Posterior cingulate gyrus (tissue), 11 donors: ENCODE measurements at regions of chr1 and their contacts with region 1.

Region 1: DNA sequence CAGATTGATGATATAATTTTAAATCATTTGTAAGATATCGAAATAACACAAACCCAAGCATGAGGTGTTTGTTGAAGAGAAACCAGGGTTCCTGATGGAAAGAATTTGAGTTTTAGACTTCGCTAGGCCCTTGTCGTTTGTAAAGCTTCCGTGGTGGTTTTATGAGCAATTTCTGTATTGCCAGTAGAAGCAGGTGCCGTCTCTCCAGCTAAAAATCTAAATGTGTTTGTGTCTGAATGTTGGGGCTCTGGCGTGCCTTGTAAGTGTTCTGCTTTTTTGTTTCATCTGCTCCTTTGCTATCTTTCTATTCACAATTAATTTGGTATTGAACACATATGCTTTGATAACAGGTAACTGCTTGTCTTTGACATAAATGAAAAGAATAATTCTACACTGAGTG is 27.5 kb downstream of the CHRM3 start:
- DNase-seq: no peak

Region 2: GRCh38 chr1:239274242-239274830 is 139.6 kb before region 1 on chr1:
- intact Hi-C with region 1: no loop called
- DNase-seq: no peak

Region 3: DNA sequence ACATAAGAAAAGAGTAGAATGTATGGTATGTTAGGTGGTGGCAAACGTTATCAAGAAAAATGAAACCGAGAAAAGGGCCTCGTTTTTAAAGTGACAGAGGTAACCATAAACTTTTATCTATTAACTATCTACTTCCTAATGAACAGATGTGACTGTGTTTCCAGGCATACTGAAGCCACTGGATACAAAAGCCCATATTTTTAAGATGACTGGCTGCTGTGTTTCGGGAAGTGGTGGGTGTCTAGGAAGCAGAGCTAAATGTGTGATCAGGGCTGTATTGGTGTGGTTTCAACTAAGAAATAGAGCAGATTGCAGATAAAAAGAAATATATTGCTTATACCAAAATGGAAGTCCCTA is 44.2 kb after region 1 on chr1:
- intact Hi-C with region 1: no loop called
- DNase-seq: no peak

Region 4: DNA sequence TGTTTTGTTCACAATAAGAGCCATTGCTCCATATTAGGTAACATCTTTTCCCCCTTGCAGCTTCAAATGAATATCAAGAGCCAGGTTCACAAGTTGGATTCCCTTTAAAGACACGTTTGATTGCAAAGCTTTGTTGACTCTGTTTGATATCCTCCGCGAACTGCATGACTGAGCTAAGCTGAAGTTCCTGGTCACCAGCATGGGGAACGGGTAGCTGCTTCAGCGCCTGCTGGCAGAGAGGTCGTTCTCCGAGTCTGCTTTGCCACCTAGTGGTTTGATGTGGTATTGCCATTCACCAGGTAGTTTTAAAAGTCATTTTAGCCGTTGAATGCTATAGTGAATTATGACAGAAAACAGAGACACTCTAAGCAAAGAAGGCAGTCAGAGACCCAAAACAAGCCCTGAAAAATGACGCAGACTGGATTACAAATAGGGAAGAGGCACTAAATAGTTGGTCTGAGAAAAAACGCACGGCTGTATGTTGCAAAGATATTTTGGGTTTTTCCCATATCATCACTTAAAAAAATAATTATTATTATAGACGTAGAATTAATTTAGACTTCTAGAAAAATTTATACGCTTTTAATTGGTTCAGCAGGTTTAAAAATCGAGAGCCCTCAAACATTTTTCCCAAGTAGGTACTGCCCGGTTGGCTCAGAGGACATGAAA is 484.3 kb after region 1 on chr1:
- intact Hi-C with region 1: loop called (anchors 5 kb)
- DNase-seq: peak; percentile 54 to 96 (median 78)